ENCODE measurements at regions of chr3 and their contacts with region 1.

Region 1: GRCh38 chr3:56988458-56989168 is 71.9 kb upstream of the SPATA12 start:
- DNase-seq: peak; percentile 83
- H3K4me3 Mint-ChIP-seq: no peak overlapping the region
- H3K27ac Mint-ChIP-seq: no peak overlapping the region
- H3K4me1 Mint-ChIP-seq: no peaks in the 10 kb centered on the region
- H3K27me3 Mint-ChIP-seq: no peaks in the 10 kb centered on the region
- CTCF ChIP-seq: peak; percentile 81

Region 2: GRCh38 chr3:56693750-56694149 is 294.9 kb before region 1 on chr3:
- CTCF ChIA-PET with region 1: interaction called, 29 read pairs
- POLR2A ChIA-PET with region 1: no interaction called
- intact Hi-C with region 1: no loop called
- DNase-seq: peak; percentile 17
- H3K4me3 Mint-ChIP-seq: no peak overlapping the region
- H3K27ac Mint-ChIP-seq: peak overlapping the region; percentile 35
- H3K4me1 Mint-ChIP-seq: peaks cover 19% of the 10 kb centered on the region
- H3K27me3 Mint-ChIP-seq: no peaks in the 10 kb centered on the region
- CTCF ChIP-seq: no peak

Region 3: GRCh38 chr3:56758539-56758981 is 230.1 kb before region 1 on chr3:
- CTCF ChIA-PET with region 1: interaction called, 11 read pairs
- POLR2A ChIA-PET with region 1: no interaction called
- intact Hi-C with region 1: no loop called
- DNase-seq: peak; percentile 83
- H3K4me3 Mint-ChIP-seq: peak overlapping the region; percentile 53
- H3K27ac Mint-ChIP-seq: peak overlapping the region; percentile 73
- H3K4me1 Mint-ChIP-seq: peaks cover 20% of the 10 kb centered on the region
- H3K27me3 Mint-ChIP-seq: no peaks in the 10 kb centered on the region
- CTCF ChIP-seq: no peak

Region 4: DNA sequence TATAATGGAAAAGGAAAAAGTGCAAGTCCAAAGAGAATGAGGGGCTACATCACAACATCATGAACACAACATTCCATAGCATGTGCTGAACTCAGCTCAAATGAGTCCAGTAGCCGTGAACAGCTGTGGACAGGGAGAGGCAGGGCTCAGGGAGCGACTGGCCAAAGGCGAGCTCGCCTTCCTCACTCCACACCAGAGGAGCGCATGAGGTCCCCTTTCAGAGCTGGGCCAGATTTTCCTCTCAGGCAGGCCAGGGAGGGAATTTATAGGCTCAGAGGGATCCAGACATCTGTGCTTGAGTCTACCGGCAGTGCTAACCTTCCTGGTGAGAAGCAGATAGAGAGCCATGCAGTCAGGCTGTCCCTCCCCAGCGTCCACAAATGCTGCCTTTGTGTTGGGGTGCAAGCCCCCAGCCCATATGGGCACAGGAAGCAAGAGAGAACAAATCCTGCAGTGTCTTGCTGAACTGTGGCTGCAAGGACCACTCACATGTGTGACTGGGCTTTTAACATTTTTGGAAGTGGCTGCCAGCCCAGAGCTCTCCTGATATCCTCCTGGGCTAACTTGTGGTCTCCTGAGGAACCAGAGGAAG is 219.4 kb before region 1 on chr3:
- CTCF ChIA-PET with region 1: no interaction called
- POLR2A ChIA-PET with region 1: no interaction called
- intact Hi-C with region 1: no loop called
- DNase-seq: no peak
- H3K4me3 Mint-ChIP-seq: no peak overlapping the region
- H3K27ac Mint-ChIP-seq: no peak overlapping the region
- H3K4me1 Mint-ChIP-seq: no peaks in the 10 kb centered on the region
- H3K27me3 Mint-ChIP-seq: no peaks in the 10 kb centered on the region
- CTCF ChIP-seq: no peak

Region 5: DNA sequence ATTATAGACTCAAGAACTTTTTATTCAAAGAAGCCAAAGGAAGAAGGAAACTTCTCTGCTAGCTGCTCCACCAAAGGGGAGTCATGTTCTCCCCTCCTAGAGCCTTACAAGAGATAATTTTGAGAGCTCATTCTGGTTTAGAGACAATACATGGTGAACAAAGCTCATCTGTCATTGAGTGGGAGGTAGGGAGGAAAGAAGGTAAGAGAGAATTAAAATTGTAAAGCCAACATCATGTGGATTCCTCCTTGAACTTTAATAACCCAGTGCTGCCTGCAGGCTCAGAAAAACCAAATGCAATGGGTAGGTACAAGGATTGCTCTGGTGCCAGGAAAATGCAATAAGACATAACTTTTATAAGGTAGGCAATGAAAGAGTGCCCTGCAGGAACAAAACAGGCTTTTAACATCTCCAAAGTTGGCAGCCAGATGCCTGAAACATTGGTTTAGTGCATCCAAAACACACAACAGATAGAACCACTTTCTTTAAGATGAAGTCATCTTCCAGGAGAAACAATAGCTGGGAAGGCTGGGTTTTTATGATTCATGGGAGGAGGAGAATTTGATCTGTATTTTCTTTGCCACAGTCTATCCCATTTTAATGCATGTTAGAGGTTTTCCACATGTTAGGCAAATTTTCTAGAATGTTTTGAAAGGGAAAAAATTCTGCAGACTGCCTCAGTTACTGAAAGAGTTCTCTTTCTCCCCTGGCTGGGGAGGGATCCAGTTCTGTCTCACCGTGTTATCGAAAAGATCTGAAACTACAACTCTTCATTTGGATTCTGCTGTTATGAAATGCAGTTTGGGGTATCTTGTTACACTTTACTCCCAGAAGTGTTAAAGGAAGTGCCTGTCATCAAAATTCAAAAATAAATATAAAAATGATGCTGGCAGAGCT is 175.6 kb before region 1 on chr3:
- CTCF ChIA-PET with region 1: interaction called, 11 read pairs
- POLR2A ChIA-PET with region 1: no interaction called
- intact Hi-C with region 1: no loop called
- DNase-seq: peak; percentile 54
- H3K4me3 Mint-ChIP-seq: no peak overlapping the region
- H3K27ac Mint-ChIP-seq: peak overlapping the region; percentile 69
- H3K4me1 Mint-ChIP-seq: peaks cover 11% of the 10 kb centered on the region
- H3K27me3 Mint-ChIP-seq: no peaks in the 10 kb centered on the region
- CTCF ChIP-seq: no peak

Region 6: DNA sequence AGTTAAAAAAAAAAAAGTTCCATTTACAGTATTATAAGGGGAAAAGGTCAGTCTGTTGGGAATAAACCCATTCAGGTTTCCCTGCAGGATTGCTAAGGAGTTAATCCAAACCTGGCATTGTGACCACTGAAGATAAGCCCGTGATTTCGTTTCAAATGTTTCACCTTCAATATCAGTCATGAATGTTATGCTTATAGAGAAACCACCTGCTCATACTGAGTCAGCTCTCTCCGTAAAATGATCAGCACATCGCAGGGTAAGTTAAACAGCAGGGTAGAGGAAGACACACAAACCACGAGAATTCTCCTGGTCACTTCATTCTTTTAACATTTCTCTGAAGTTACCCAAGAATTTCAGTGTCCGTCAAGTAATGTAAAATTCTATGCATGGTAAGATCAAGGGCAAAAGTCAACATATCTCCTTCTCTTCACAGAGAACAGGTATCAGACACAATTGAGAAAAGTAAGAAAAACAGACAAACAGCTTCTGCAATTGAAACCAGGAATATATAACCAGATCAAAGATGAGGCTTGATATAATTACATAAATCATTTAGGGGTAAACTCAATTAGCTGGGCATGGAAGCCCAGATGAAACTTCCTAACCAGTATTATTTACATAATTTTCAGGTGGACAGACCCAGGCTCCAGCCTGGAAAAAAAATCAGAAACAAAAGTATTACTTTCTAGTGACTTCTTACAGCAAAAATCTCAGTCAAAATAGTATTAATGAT is 119.3 kb before region 1 on chr3:
- CTCF ChIA-PET with region 1: no interaction called
- POLR2A ChIA-PET with region 1: no interaction called
- intact Hi-C with region 1: no loop called
- DNase-seq: no peak
- H3K4me3 Mint-ChIP-seq: no peak overlapping the region
- H3K27ac Mint-ChIP-seq: no peak overlapping the region
- H3K4me1 Mint-ChIP-seq: peaks cover 8% of the 10 kb centered on the region
- H3K27me3 Mint-ChIP-seq: no peaks in the 10 kb centered on the region
- CTCF ChIP-seq: no peak

Region 7: GRCh38 chr3:56899851-56900250 is 88.8 kb before region 1 on chr3:
- CTCF ChIA-PET with region 1: no interaction called
- POLR2A ChIA-PET with region 1: no interaction called
- intact Hi-C with region 1: no loop called
- DNase-seq: no peak
- H3K4me3 Mint-ChIP-seq: no peak overlapping the region
- H3K27ac Mint-ChIP-seq: no peak overlapping the region
- H3K4me1 Mint-ChIP-seq: no peaks in the 10 kb centered on the region
- H3K27me3 Mint-ChIP-seq: no peaks in the 10 kb centered on the region
- CTCF ChIP-seq: no peak

Measured in MCF 10A (cell line).